Astrocyte of the cerebellum (primary cell): ENCODE measurements at regions of chr17 and their contacts with region 1.

Region 1: DNA sequence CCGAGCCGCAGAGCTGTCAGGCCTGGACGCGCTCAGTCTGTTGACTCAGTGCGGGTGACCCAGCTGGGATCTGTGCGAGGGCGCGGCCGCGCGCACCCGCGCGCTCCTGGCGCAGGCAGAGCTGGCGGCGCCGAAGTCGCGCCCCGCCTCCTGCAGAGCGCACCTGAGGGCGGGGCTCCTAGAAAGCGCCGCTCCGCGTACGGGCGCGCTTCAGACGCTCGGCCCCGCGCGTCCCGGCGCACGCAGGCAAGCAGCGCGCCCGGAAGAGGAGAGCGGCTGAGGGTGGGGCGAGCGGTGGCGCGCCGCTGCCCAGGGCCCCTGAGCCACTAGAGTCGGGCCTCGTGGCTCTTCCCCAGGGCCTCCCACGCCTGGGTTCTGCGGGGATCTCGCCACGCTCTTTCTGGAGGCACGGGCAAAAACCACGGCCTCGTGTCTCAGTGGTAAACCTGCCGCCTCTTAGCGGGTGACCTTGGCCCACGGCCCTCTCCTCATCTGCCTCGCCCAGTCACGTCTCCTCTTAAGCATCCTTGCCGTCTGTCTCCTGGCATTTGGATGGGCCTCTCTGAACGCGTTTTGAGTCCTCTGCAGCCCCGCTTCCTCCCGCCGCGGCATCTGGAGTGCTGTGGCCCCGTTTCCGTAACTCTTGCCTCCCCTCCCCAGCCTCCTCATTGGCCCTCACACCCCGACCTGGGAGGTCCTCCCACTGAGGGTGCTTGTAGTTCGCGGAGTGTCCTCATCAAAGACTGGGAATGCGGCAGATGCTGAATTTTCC is at the start of gene ABCA5:
- DNase-seq: peak; percentile 60
- H3K4me3 ChIP-seq: peak within 1 kb of the TSS; percentile 68
- CTCF ChIP-seq: no peak

Region 2: DNA sequence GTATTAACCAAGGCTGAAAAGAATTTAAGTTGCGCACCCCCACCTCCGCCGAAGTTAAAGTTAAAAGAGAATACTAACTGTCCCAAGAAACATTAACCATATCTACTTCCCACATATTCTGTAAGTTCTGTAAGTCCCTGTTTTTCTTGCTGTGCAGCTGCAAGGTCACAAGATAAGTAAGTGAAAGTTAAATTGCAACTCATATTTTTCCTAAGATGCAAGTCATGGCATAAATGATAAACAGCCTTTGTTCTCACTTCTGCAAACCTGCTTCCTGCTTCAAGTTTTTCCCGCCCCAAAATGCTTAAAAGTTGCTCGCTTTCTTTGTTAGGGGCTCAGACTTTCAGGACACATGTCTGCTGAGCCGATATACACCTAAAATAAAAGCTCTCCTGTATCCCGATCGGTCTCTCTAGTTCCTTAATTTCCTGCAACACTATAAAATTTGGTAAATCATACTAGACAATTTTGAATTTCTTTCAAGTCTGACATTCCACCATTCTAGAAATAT is 233.9 kb before region 1 on chr17:
- in situ Hi-C with region 1: no loop called
- DNase-seq: no peak
- H3K4me3 ChIP-seq: no peak overlapping the region
- CTCF ChIP-seq: no peak

Region 3: GRCh38 chr17:69235338-69235930 is 91.8 kb before region 1 on chr17:
- in situ Hi-C with region 1: no loop called
- DNase-seq: peak; percentile 72
- H3K4me3 ChIP-seq: no peak overlapping the region
- CTCF ChIP-seq: peak; percentile 81

Region 4: DNA sequence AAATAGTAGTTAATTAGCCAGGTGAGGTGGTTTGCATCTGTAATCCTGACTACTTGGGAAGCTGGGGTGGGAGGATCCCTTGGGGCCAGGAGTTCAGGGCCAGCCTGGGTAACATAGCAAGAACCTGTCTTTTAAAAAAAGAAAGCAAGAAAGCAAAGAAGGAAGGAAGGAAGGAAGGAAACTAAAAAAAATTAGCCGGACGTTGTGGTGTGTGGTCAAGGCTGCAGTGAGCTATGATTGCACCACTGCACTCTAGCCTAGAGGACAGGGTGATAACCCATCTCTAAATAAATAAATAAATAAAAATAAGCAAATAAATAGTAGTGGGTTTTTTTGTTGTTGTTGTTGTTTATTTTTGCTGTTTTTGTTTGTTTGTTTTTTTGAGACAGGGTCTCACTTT is 48.0 kb after region 1 on chr17:
- in situ Hi-C with region 1: loop called (anchors 5 kb)
- DNase-seq: no peak
- H3K4me3 ChIP-seq: no peak overlapping the region
- CTCF ChIP-seq: no peak